ENCODE measurements at regions of chr6 and their contacts with region 1.

Region 1: GRCh38 chr6:130885392-130886192 is 58.4 kb downstream of the SMLR1 start:
- H3K4me3 Mint-ChIP-seq: no peak overlapping the region
- H3K27ac Mint-ChIP-seq: no peak overlapping the region
- H3K4me1 Mint-ChIP-seq: peaks cover 30% of the 10 kb centered on the region
- H3K27me3 Mint-ChIP-seq: no peaks in the 10 kb centered on the region

Region 2: GRCh38 chr6:129276986-129277385 is 1608.6 kb before region 1 on chr6:
- intact Hi-C with region 1: no loop called
- H3K4me3 Mint-ChIP-seq: no peak overlapping the region
- H3K27ac Mint-ChIP-seq: no peak overlapping the region
- H3K4me1 Mint-ChIP-seq: no peaks in the 10 kb centered on the region
- H3K27me3 Mint-ChIP-seq: no peaks in the 10 kb centered on the region

Region 3: GRCh38 chr6:130929036-130929678 is 43.6 kb after region 1 on chr6:
- intact Hi-C with region 1: loop called (anchors 5 kb)
- H3K4me3 Mint-ChIP-seq: no peak overlapping the region
- H3K27ac Mint-ChIP-seq: peak overlapping the region; percentile 13
- H3K4me1 Mint-ChIP-seq: peaks cover 39% of the 10 kb centered on the region
- H3K27me3 Mint-ChIP-seq: no peaks in the 10 kb centered on the region

Region 4: DNA sequence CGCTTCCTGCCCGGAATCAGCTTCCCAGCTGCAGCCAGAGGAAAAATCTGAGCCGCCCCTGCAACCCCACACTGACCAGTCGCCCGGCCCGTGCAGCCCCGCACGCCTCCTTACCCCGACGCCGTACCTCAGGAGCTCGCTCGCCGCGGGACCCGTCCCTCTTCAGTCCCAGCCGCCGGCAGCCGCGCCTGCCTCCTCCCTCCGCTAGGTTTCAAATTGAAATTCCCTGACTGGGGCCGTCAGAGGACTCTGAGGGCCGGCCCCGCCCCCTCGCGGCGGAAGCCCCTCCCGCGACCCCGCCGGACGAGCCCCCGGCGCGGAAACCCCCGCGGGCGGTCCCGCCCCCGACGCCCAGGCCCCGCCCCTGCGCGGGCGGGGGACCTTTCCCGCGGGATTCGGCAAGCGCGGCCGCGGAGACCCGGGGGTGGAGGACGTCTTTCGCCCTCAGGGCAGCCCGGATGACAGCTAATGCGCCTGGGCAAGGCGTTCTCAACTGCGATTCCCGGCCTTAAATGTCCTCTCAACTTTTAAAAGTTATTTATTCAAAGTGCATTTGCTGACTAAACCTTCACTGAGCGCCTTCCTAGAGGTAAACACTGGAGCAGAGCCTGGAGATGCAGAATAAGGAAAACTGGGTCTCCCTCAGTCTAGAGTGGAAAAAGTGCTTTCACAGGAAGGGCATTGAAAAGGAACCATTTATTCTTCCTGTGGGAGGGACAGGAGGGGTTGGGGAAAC is 177.6 kb after region 1 on chr6 and contains the start of gene EPB41L2:
- intact Hi-C with region 1: loop called (anchors 5 kb)
- H3K4me3 Mint-ChIP-seq: peak within 1 kb of the TSS; percentile 89
- H3K27ac Mint-ChIP-seq: peak within 1 kb of the TSS; percentile 69
- H3K4me1 Mint-ChIP-seq: peaks cover 30% of the 10 kb centered on the region
- H3K27me3 Mint-ChIP-seq: peaks cover 25% of the 10 kb centered on the region

Region 5: GRCh38 chr6:131116749-131117360 is 231.3 kb after region 1 on chr6:
- intact Hi-C with region 1: loop called (anchors 1 kb)
- H3K4me3 Mint-ChIP-seq: no peak overlapping the region
- H3K27ac Mint-ChIP-seq: no peak overlapping the region
- H3K4me1 Mint-ChIP-seq: peaks cover 12% of the 10 kb centered on the region
- H3K27me3 Mint-ChIP-seq: no peaks in the 10 kb centered on the region